ENCODE measurements at regions of chr22 and their contacts with region 1.

Region 1: GRCh38 chr22:48492366-48493320 is 1335.0 kb downstream of the BRD1 start:
- DNase-seq: peak; percentile 32
- ATAC-seq: peak; percentile 71
- H3K4me3 Mint-ChIP-seq: no peak overlapping the region
- H3K27ac Mint-ChIP-seq: no peak overlapping the region
- H3K4me1 Mint-ChIP-seq: peaks cover 7% of the 10 kb centered on the region
- H3K27me3 Mint-ChIP-seq: peaks cover 54% of the 10 kb centered on the region
- CTCF ChIP-seq: peak; percentile 26

Region 2: DNA sequence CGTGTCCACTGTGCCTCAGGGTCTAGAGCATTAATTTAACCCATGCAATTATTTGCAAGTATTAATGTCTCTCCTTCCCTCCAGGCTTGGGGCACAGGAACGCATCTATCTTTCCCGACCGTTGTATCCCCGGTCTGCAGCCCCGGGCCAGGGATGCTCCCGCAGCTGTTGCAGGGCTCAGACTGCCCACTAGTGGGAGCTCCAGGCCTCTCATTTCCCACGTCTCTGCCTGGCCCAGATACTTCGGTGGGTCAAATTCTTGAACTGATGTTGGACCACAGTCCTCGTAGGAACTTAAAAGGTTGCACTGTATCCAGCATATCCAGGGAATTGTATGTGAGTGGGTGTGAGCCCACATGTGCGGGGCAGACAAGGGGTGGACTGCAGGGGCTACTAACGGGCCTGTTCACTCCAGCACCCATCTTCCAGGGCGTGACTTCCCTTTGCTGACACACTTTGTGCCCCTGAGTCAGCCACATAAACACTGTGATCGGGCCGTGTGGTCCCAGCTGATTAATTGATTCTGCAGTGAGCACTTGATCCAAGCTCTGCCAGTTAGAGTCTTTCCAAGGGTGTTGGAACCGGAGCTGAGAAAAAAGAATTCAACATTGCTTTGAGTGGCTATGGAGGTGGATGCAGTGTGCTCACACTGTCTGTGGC is 1278.9 kb before region 1 on chr22:
- CTCF ChIA-PET with region 1: interaction called, 38 read pairs
- POLR2A ChIA-PET with region 1: no interaction called
- intact Hi-C with region 1: no loop called
- DNase-seq: peak; percentile 34
- ATAC-seq: peak; percentile 69
- H3K4me3 Mint-ChIP-seq: no peak overlapping the region
- H3K27ac Mint-ChIP-seq: no peak overlapping the region
- H3K4me1 Mint-ChIP-seq: no peaks in the 10 kb centered on the region
- H3K27me3 Mint-ChIP-seq: no peaks in the 10 kb centered on the region
- CTCF ChIP-seq: peak; percentile 53

Region 3: GRCh38 chr22:47452184-47452583 is 1040.5 kb before region 1 on chr22:
- CTCF ChIA-PET with region 1: interaction called, 5 read pairs
- POLR2A ChIA-PET with region 1: no interaction called
- intact Hi-C with region 1: loop called (anchors 5 kb)
- DNase-seq: no peak
- ATAC-seq: no peak
- H3K4me3 Mint-ChIP-seq: no peak overlapping the region
- H3K27ac Mint-ChIP-seq: no peak overlapping the region
- H3K4me1 Mint-ChIP-seq: no peaks in the 10 kb centered on the region
- H3K27me3 Mint-ChIP-seq: no peaks in the 10 kb centered on the region
- CTCF ChIP-seq: no peak

Region 4: GRCh38 chr22:47515384-47516122 is 977.1 kb before region 1 on chr22:
- CTCF ChIA-PET with region 1: interaction called, 3 read pairs
- POLR2A ChIA-PET with region 1: no interaction called
- intact Hi-C with region 1: loop called (anchors 1 kb)
- DNase-seq: no peak
- ATAC-seq: no peak
- H3K4me3 Mint-ChIP-seq: no peak overlapping the region
- H3K27ac Mint-ChIP-seq: no peak overlapping the region
- H3K4me1 Mint-ChIP-seq: no peaks in the 10 kb centered on the region
- H3K27me3 Mint-ChIP-seq: peaks cover 5% of the 10 kb centered on the region
- CTCF ChIP-seq: no peak

Region 5: DNA sequence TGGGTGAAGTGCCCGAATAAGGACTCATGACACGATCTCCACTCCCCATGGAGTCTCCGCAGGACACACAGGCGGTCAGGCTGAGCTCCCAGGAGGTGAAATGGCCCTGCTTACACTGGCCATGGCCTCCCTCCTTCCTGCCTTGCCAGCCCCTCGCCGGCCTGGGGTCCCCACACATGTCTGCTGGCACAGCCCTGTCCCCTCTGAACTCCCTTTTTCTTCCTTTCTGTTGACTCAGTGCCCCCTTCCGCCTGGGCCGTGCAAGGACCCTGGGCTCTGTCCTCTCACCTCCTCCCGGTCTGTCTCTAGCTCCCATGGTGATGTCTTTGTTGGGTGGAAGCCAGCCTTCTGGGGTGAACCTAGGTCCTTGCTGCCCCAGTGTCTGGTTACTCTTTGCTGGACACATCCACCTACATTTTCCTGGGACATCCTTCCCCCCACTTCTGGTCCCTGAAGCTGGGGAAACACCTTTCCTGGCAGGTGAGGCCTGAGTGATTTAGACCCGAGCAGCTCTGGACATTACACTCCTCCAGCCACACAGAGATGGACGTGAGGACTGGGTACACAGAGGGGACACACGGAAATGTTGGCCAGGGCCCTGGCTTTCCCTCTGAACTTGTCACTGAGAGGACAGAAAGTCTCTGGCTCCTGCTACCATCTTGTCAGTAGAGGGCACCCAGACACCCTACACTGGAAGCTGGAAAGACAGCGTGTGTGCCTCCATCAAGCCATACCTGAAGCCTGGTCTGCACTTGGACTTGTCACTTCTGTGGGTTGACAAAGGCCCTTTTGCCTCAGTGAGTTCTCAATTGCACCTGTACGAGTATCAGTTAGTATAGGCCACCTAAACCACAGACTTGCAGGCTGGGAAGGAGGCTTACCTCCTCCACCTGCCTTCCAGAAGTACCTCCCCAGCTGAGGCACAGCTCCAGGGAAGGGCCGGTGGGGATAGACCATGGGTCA is 865.9 kb before region 1 on chr22:
- CTCF ChIA-PET with region 1: no interaction called
- POLR2A ChIA-PET with region 1: no interaction called
- intact Hi-C with region 1: loop called (anchors 2 kb)
- DNase-seq: no peak
- ATAC-seq: no peak
- H3K4me3 Mint-ChIP-seq: no peak overlapping the region
- H3K27ac Mint-ChIP-seq: no peak overlapping the region
- H3K4me1 Mint-ChIP-seq: no peaks in the 10 kb centered on the region
- H3K27me3 Mint-ChIP-seq: no peaks in the 10 kb centered on the region
- CTCF ChIP-seq: no peak

Region 6: GRCh38 chr22:47842132-47842531 is 650.5 kb before region 1 on chr22:
- CTCF ChIA-PET with region 1: interaction called, 4 read pairs
- POLR2A ChIA-PET with region 1: no interaction called
- intact Hi-C with region 1: loop called (anchors 2 kb)
- DNase-seq: no peak
- ATAC-seq: no peak
- H3K4me3 Mint-ChIP-seq: no peak overlapping the region
- H3K27ac Mint-ChIP-seq: no peak overlapping the region
- H3K4me1 Mint-ChIP-seq: peaks cover 20% of the 10 kb centered on the region
- H3K27me3 Mint-ChIP-seq: peaks cover 27% of the 10 kb centered on the region
- CTCF ChIP-seq: no peak

Region 7: DNA sequence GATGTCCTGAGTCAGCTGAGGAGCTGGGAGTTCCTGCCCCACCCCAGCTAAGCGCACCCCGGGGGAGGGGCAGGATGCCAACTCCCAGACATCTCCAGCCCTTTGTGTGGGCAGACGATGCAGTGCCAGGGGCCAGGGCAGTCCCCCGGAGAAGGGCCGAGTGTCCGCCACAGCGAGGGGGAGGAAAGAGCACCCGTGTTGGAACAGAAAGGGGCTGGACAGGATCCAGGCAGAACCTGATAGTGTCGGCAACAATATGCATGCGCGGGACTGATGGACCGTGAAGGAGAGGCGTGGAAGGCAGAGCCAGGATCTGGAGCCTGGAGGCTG is 99.6 kb before region 1 on chr22:
- CTCF ChIA-PET with region 1: no interaction called
- POLR2A ChIA-PET with region 1: no interaction called
- intact Hi-C with region 1: no loop called
- DNase-seq: no peak
- ATAC-seq: no peak
- H3K4me3 Mint-ChIP-seq: no peak overlapping the region
- H3K27ac Mint-ChIP-seq: no peak overlapping the region
- H3K4me1 Mint-ChIP-seq: no peaks in the 10 kb centered on the region
- H3K27me3 Mint-ChIP-seq: peaks cover 5% of the 10 kb centered on the region
- CTCF ChIP-seq: no peak

Region 8: DNA sequence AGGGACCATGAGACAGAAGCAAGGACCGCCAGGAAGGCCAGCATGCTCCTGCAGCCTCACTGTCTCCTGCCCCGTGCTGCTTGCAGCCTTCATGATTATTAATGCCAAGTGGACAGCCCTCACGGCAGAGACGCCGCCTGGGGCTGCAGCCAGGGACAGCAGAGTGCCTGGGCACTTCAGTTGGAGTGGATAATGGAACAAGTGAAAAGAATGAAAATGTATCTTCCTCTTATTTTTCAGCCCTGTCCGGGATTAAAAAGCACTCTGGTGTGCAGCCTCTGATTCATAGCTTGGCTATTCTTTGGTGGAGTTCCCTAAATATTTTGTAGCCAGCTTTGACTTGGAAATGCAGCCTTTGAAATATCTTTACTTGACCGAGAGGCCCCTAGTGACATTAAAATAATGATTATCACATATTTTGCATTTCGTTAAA is 69.1 kb before region 1 on chr22:
- CTCF ChIA-PET with region 1: no interaction called
- POLR2A ChIA-PET with region 1: no interaction called
- intact Hi-C with region 1: no loop called
- DNase-seq: no peak
- ATAC-seq: no peak
- H3K4me3 Mint-ChIP-seq: no peak overlapping the region
- H3K27ac Mint-ChIP-seq: no peak overlapping the region
- H3K4me1 Mint-ChIP-seq: no peaks in the 10 kb centered on the region
- H3K27me3 Mint-ChIP-seq: peaks cover 16% of the 10 kb centered on the region
- CTCF ChIP-seq: no peak

Measured in activated B cell treated with CpG ODN at 0.5 μM for 24 hours (primary cell).